ENCODE measurements at regions of chr6 and their contacts with region 1.

Region 1: GRCh38 chr6:137297887-137298286 is 78.7 kb upstream of the IFNGR1 start:
- DNase-seq: peak; percentile 76
- ATAC-seq: peak; percentile 99
- H3K4me3 Mint-ChIP-seq: 0 out of 2 replicates have a peak overlapping the region, but pooled peaks have one; percentile 32
- H3K27ac Mint-ChIP-seq: peak overlapping the region; percentile 94
- H3K4me1 Mint-ChIP-seq: peaks cover 57% of the 10 kb centered on the region
- H3K27me3 Mint-ChIP-seq: peaks cover 7% of the 10 kb centered on the region; the same call in 1 of the 2 replicates
- CTCF ChIP-seq: no peak

Region 2: DNA sequence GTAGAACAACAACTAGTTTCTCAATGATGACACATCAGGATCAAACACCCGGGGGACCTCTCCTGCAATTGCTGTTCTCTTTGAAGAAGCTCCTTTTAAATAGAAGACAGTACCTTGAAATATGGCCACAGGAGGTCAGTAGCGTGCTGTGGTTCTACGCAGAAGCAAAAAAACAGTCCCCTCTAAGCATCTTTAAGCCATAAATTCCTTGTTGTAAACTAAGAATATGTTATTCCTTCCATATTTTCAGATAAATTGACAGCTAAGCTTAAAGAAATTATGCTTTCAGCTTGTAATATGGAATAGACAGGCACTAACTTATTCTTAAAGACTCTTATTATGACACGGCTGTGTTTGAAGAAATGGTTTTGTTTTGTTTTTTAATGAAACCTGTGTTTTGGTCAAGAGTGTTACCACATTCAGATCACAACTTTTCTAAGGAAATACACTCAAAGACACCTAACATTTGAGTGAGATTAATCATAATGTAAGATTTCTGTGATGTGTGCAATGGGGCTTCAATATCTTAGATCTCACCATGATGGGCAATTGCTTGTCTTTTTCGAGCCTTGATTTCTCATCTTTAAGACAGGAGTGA is 203.4 kb before region 1 on chr6:
- CTCF ChIA-PET with region 1: interaction called, 10 read pairs
- POLR2A ChIA-PET with region 1: no interaction called
- DNase-seq: peak; percentile 55
- ATAC-seq: peak; percentile 72
- H3K4me3 Mint-ChIP-seq: no peak overlapping the region
- H3K27ac Mint-ChIP-seq: no peak overlapping the region
- H3K4me1 Mint-ChIP-seq: peaks cover 13% of the 10 kb centered on the region
- H3K27me3 Mint-ChIP-seq: no peaks in the 10 kb centered on the region; the same call in 1 of the 2 replicates
- CTCF ChIP-seq: peak; percentile 45; the same call in 1 of the 2 replicates

Region 3: GRCh38 chr6:137261393-137262160 is 36.3 kb before region 1 on chr6:
- CTCF ChIA-PET with region 1: no interaction called
- POLR2A ChIA-PET with region 1: no interaction called
- DNase-seq: no peak
- ATAC-seq: no peak
- H3K4me3 Mint-ChIP-seq: no peak overlapping the region
- H3K27ac Mint-ChIP-seq: no peak overlapping the region
- H3K4me1 Mint-ChIP-seq: no peaks in the 10 kb centered on the region
- H3K27me3 Mint-ChIP-seq: no peaks in the 10 kb centered on the region
- CTCF ChIP-seq: no peak